Common myeloid progenitor, CD34-positive (primary cell): ENCODE measurements at regions of chr19 and their contacts with region 1.

Region 1: DNA sequence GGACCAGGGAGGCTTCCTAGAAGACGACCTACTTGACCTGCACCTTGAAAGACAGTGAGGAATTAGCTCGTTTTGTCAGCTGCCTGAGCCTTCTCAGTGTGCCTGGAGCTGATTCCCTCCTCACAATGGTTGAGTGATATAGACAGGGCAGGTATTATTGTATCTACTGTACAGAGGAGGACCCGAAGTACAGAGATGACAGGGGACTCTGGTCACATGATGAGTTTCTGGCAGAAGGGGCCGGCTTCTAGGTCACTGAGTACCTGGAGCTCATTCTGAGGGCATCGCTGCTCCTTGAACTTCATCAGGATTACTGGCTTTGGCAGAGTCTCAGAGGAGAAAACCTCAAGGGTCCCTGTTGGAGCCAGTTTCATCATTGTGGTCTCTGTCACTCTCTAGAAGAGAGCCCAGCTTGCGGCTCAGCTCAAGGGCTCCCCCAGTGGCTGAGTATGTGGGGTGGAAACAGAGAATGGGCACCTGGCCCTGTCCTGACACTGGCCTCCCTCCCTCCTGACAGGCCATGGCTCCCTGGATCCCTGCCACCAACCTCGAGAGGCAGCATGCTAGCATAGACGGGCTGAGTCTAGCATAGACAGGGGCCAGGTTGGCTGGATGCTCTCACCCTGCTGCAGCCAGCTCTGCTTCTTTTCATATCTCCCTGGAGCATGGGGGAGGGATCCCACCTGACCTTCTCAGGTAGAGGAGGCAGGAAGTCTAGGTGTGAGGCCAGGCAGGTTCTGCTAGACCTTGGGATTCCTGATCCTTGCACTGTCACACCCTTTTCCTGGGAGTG is 38.7 kb downstream of the NFIX start:
- DNase-seq: peak in 2 of 3 donors; percentile 70 to 73
- H3K4me3 ChIP-seq: no peak overlapping the region
- H3K27ac ChIP-seq: no peak overlapping the region
- H3K4me1 ChIP-seq: peaks cover 0 to 7% (median 3%) of the 10 kb centered on the region in 4 experiments
- H3K27me3 ChIP-seq: no peaks in the 10 kb centered on the region

Region 2: DNA sequence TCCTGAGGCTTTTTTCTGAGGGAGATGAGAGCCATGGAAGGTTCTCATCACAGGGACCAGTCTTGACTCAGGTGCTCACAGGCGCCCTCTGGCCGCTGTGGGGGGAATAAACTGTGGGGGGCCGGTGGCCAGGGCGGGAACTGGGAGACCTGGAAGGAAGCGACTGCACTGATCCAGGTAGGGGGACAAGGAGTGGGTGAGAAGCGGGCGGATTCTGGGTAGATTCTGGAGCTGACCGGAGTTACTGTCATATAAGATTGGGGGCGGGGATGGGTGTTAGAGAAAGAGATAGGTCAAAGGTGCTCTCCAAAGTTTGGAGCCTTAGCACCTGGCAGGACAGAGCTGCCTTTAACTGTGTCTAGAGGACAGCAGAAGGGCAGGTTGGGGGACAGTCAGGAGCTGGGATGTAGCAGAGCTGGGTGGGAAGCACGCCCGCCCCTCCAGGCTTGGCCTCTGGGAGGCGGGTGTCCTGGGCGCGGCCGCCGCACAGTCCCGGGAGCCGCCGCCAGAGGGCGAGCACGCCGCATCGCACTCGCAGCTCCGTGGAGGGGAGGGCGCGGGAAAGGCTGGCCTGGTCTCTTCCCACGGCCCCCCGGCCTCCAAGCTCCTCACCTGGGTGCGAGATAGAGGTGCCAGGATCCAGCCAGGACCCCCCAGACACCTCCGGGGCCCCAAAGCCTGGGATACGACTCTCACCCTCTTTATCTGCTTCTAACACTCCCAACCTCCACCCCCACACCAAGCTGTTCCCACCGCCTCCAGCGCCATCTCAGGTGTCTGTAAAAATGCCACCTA is 68.8 kb before region 1 on chr19:
- CTCF ChIA-PET with region 1: interaction called, 10 read pairs
- POLR2A ChIA-PET with region 1: no interaction called
- DNase-seq: peak; percentile 73 to 78 (median 76)
- H3K4me3 ChIP-seq: peak overlapping the region; percentile 38 to 87 (median 69)
- H3K27ac ChIP-seq: peak overlapping the region in 1 of 2 experiments; percentile 79
- H3K4me1 ChIP-seq: peaks cover 0 to 15% (median 6%) of the 10 kb centered on the region in 4 experiments
- H3K27me3 ChIP-seq: no peaks in the 10 kb centered on the region

Region 3: DNA sequence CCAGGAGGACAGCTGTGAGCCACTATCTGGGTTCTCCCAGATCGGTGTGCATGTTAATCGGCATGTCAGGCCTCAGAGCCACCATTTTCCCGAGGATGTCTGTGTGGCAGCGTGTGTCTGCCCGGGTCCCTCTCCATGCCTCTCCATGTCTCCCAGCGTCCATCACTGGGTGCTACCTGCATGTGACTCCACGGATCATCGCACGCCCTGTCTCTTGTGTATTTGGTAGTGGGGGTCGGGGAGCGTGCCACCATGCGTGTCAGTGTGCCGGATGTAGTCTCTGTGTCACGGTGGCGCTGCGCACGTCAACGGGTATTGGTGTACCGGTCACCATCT is 32.9 kb before region 1 on chr19:
- CTCF ChIA-PET with region 1: interaction called, 22 read pairs
- POLR2A ChIA-PET with region 1: no interaction called
- DNase-seq: no peak
- H3K4me3 ChIP-seq: no peak overlapping the region
- H3K27ac ChIP-seq: no peak overlapping the region
- H3K4me1 ChIP-seq: peaks cover 0 to 11% (median 6%) of the 10 kb centered on the region in 4 experiments
- H3K27me3 ChIP-seq: peaks cover 0 to 7% (median 0%) of the 10 kb centered on the region in 5 experiments

Region 4: DNA sequence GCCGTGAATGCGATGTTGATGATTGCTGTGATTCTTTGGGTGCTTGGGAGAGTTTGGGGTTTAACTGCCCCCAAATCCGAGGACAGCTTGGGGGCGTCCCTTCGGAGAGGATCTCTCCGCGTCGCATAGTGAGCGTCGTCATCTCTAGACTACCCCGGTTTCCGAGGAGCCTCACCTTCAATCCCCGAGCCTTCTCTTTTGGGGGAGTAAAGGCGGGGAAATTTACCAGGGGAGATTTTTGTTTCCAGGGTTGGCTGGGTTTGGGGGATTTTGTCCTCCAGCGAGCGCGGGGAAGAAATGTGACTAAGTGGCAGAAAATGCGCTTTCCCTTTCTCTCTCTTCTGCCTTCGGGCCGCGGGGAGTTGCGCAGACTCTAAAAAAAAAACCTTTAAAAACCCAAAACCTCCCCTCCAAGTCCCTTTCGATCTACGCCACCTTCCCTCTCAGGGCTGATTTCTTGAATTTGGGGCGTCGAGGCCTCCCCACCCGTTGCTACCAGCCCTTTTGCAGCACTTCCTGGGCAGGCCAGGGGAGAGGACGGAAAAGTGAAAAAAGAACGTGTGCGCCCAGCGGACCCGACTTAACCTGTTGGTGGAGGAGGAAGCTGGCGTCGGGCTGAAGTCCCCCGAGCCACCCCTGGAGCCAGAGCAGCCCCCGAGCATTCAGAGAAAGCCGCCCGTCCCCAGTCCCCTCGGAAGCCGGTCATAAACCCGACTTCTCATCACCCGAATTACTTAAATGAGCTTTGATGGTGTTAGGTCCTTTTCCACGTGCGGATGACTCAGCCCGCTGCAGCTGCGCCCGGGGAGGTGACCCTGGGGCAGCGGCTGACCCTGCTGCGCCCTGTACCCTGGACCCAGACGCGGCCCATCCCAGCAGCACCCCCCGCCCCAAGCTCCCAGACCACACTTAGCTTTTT is 21.1 kb before region 1 on chr19:
- CTCF ChIA-PET with region 1: interaction called, 66 read pairs
- POLR2A ChIA-PET with region 1: no interaction called
- DNase-seq: peak in 2 of 3 donors; percentile 59 to 72
- H3K4me3 ChIP-seq: peak overlapping the region; percentile 13 to 74 (median 51)
- H3K27ac ChIP-seq: no peak overlapping the region
- H3K4me1 ChIP-seq: peaks cover 0 to 56% (median 42%) of the 10 kb centered on the region in 4 experiments
- H3K27me3 ChIP-seq: peaks cover 24 to 73% (median 57%) of the 10 kb centered on the region in 5 experiments

Region 5: GRCh38 chr19:13044231-13044836 is 10.3 kb after region 1 on chr19:
- CTCF ChIA-PET with region 1: interaction called, 253 read pairs
- POLR2A ChIA-PET with region 1: no interaction called
- DNase-seq: peak in 1 of 3 donors; percentile 58
- H3K4me3 ChIP-seq: no peak overlapping the region
- H3K27ac ChIP-seq: no peak overlapping the region
- H3K4me1 ChIP-seq: peaks cover 2 to 18% (median 9%) of the 10 kb centered on the region in 4 experiments
- H3K27me3 ChIP-seq: no peaks in the 10 kb centered on the region

Region 6: GRCh38 chr19:13069415-13070359 is 35.7 kb after region 1 on chr19:
- CTCF ChIA-PET with region 1: interaction called, 253 read pairs
- POLR2A ChIA-PET with region 1: no interaction called
- DNase-seq: peak; percentile 84 to 93 (median 86)
- H3K4me3 ChIP-seq: peak overlapping the region in 2 of 7 experiments; percentile 20 to 30
- H3K27ac ChIP-seq: peak overlapping the region in 1 of 2 experiments; percentile 74
- H3K4me1 ChIP-seq: peaks cover 0 to 80% (median 49%) of the 10 kb centered on the region in 4 experiments
- H3K27me3 ChIP-seq: no peaks in the 10 kb centered on the region

Region 7: DNA sequence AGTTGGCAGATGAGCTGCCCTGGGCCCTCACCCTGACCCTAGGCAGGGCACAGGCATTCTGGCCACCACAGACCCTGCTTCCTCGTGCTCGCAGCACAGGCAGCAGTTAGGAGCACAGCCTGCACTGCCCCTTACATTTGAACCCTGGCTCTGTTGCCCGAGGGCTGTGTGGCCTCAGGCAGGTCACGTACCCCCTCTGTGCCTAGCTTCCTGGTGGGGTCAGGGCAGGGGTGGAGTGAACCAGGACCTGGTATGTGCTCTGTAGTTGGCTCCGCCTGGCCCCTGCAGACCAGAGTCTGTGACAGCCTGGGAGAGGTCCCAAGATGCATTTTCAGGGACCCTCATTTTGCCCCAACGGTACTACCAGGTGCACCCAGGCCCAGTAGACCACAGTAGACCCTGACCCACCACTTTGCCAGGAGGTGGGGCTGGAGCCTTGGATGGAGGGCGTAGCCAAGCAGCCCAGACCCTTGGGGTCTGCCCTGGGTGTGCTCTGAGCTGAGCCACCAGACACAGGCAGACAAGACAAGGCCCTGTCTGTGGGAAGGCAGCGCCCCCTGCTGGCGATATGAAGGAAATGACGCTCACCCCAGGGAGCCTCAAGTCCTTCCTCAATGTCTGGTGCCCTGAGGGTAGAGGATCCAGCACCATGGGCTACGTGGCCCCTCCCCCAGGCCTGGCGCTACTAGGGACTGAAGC is 59.5 kb after region 1 on chr19:
- CTCF ChIA-PET with region 1: interaction called, 123 read pairs
- POLR2A ChIA-PET with region 1: interaction called, 7 read pairs
- DNase-seq: peak; percentile 88 to 93 (median 92)
- H3K4me3 ChIP-seq: peak overlapping the region in 3 of 7 experiments; percentile 32 to 98 (median 83)
- H3K27ac ChIP-seq: peak overlapping the region in 1 of 2 experiments; percentile 19
- H3K4me1 ChIP-seq: peaks cover 0 to 67% (median 53%) of the 10 kb centered on the region in 4 experiments
- H3K27me3 ChIP-seq: no peaks in the 10 kb centered on the region